ENCODE measurements at regions of chr2 and their contacts with region 1.

Region 1: DNA sequence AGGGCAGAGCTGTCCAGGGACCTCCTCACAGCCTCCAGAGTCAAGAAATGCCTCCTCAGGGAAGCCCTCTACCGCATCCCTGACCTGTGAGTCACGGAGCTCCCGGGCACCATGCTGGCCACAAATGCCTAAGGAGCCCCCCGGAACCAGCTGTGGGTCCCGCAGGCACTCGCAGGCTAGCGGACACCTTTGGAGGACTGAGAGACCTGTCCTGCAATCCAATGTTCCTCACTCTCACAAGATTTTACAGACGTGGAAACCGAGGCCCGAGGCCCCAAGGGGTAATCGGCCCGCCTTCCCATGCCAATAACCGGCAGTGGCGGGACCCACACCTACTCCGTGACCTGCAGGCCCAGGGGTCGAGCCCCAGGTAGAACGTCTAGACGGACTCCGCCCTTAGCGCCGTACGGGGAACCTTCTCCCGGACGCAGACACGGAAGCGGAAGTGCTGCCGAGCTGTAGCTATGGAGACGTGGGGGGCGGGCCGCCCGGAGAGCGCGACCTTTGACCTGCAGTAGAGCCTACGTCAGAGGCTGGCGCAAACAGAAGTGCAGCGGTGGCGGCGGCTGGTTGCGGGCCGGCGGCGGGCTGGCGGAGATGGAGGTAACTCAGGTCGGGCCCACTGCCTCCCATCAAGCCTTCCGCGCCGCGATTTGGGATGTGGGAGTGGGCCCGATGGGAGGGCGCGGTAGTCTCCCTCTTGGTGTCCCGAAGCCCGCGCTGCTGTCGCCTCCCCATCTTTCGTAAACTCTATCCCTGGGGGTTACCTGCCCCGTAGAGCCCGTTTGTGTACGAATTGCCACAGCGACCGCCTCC is at the start of gene GCC2:
- DNase-seq: peak; percentile 98
- total RNA-seq, gene GCC2: 22.0 TPM

Region 2: GRCh38 chr2:108351889-108352288 is 97.0 kb before region 1 on chr2:
- intact Hi-C with region 1: no loop called
- DNase-seq: no peak

Region 3: GRCh38 chr2:108575132-108575966 is 126.5 kb after region 1 on chr2:
- intact Hi-C with region 1: loop called (anchors 5 kb)
- DNase-seq: no peak